Natural killer cell (primary cell): ENCODE measurements at regions of chr3 and their contacts with region 1.

Region 1: DNA sequence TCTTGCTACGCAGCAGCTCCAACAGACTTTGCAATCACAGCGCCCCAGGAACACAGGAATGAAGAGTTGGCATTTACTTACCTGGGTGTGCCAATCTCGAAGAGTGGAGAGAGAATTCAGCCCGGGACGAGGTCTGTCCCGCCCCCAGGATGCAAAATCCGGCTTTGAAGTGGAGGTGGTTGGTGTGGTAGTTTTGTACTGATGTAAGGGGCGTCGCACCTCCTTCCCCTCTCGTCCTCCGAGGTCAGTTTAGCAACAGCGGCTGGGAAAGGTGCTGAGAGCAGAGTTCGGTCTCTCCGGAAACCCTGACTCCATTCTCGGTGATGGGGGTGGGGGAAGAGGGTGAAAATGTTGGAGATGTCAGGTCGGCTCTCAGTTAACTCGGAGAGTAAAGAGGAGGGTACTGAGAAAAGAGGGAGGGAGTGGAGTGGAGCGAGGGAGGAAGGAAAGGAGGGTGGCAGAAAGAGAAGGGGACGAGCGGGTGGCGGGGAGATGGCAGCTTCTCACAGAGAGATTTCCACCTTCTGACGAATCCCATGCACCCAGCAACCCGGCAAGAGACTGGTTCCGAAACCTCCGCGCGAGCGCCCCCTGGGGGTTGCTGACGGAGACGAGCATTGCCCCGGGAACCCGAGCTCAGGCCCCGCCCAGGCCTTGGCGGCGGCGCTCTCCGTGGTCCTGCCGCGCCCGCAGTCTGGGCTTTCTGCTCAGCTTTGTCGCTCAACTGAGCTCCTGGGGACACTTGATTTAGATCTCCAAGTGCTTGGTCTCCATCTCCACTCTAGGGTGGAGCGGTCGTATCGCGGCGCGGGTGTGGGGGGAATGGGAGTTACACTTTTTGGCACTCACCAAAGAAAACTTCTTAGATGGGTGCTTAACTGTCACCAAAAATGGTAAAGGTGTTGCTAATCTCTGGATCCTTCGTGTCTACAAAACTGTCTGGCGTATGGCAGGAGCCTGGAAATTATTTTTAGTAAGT is at the start of gene CPNE4:
- DNase-seq: peak; percentile 30 to 59
- ATAC-seq: peak; percentile 63 to 82 (median 82)
- H3K4me3 ChIP-seq: no peak within 1 kb of the TSS
- H3K4me3 Mint-ChIP-seq: no peak within 1 kb of the TSS
- H3K27ac ChIP-seq: no peak within 1 kb of the TSS
- H3K27ac Mint-ChIP-seq: no peak within 1 kb of the TSS
- H3K4me1 ChIP-seq: no peaks in the 10 kb centered on the region
- H3K4me1 Mint-ChIP-seq: peaks cover 0 to 6% of the 10 kb centered on the region in 2 donors
- H3K27me3 ChIP-seq: peaks cover 31% of the 10 kb centered on the region
- H3K27me3 Mint-ChIP-seq: peaks cover 32 to 56% of the 10 kb centered on the region in 2 donors
- CTCF ChIP-seq: no peak
- total RNA-seq, gene CPNE4: not detected

Region 2: GRCh38 chr3:131053043-131053859 is 981.5 kb before region 1 on chr3:
- intact Hi-C with region 1: loop called (anchors 10 kb)
- DNase-seq: no peak
- ATAC-seq: no peak
- H3K4me3 ChIP-seq: no peak overlapping the region
- H3K4me3 Mint-ChIP-seq: no peak overlapping the region
- H3K27ac ChIP-seq: no peak overlapping the region
- H3K27ac Mint-ChIP-seq: no peak overlapping the region
- H3K4me1 ChIP-seq: no peaks in the 10 kb centered on the region
- H3K4me1 Mint-ChIP-seq: peaks cover 0 to 1% of the 10 kb centered on the region in 2 donors
- H3K27me3 ChIP-seq: no peaks in the 10 kb centered on the region
- H3K27me3 Mint-ChIP-seq: no peaks in the 10 kb centered on the region
- CTCF ChIP-seq: no peak